Activated CD4-positive, alpha-beta memory T cell treated with anti-CD3 and anti-CD28 coated beads for 36 hours (primary cell): ENCODE measurements at regions of chr3 and their contacts with region 1.

Region 1: DNA sequence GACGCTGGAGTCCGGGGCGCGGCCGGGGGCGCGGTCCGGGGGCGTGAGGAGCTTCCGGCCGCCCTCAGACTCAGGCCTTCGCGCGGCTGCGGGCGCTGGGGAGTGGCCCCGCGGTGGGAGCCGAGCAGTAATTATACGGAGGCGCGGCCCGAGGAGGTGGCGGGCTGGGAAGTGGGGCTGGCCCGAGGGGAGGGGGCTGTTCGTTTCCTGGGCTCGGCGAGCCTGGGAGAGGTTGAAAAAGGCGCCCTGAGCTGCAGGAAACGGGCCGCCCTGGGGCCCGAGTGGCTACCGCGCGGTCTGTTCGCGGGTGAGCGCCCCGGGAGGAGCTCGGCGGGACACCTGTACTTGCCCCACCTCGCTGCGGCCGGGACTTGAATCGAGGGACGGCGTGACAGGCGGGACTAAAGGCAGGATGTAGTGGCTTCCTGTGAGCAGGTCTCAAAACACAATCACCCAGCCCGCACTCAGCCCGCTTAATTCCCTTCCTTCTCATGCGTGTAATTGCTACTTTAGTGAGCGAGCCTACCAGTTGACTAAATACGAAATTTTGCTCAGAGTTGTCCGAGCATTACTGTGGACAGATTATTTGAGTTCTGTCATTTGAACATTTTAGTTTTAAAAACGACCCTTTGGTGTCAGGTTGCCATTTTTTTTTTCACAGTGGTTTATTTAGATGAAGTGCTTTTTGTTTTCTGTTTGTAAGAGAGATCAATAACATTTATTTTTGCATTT is 860 bp downstream of the RASA2 start:
- DNase-seq: peak; percentile 94
- H3K4me3 Mint-ChIP-seq: peak overlapping the region; percentile 84
- H3K27ac Mint-ChIP-seq: peak overlapping the region; percentile 94
- H3K4me1 Mint-ChIP-seq: peaks cover 67% of the 10 kb centered on the region
- H3K27me3 Mint-ChIP-seq: no peaks in the 10 kb centered on the region

Region 2: GRCh38 chr3:141477224-141477623 is 10.5 kb before region 1 on chr3:
- CTCF ChIA-PET with region 1: interaction called, 8 read pairs
- POLR2A ChIA-PET with region 1: no interaction called
- intact Hi-C with region 1: loop called (anchors 1 kb)
- DNase-seq: no peak
- H3K4me3 Mint-ChIP-seq: no peak overlapping the region
- H3K27ac Mint-ChIP-seq: no peak overlapping the region
- H3K4me1 Mint-ChIP-seq: peaks cover 22% of the 10 kb centered on the region
- H3K27me3 Mint-ChIP-seq: no peaks in the 10 kb centered on the region